ENCODE measurements at regions of chr16 and their contacts with region 1.

Region 1: DNA sequence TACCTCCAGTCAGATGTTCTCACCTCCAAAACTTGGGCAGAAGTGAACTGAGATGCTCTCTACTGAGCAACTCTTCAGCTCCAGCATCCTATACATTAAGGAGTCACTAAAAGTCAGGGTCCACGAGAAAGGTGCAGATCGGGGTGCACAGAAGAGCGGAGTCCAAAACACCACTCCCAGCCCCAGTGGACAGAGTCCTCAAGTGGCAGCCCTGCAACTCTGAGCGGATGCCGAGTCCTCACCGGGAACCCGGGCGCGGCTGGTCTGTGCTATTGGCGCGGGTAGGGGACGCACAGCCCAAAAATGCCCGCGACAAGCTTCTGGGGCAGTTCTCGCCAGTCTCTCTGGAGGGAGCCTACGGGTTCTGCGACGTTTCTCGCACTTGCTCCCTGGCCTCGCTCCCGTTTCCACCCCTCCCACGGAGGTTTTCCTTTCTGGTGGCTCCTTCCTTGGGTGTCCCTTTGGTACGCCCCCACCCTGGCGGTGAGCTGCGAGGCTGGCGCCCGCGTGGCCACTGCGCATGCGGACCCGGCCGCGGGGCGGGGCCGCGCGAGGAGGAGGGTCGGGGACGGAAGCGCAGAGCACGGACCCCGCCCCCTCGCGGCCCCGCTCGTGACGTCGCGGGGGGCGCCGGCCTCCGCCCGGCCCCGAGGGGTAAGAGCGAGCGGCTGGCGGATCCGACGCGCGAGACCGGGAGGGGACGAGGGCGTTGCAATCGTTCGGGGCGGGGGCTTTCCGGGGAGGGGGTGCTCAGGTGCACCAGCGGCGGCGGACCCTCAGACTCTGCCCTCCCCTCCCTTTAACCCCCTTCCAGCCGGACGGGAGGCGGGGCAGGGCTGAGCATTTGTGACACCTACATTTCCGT is at the start of gene TMEM219:
- DNase-seq: peak; percentile 88 to 94
- ATAC-seq: peak; percentile 96 to 97
- H3K4me3 ChIP-seq: peak within 1 kb of the TSS; percentile 74
- H3K27ac ChIP-seq: peak within 1 kb of the TSS; percentile 86 to 96
- H3K4me1 ChIP-seq: peaks cover 12% of the 10 kb centered on the region; the same call in 1 of the 3 replicates
- CTCF ChIP-seq: no peak; the same call in 1 of the 3 replicates
- EP300 ChIP-seq: no peak
- POLR2A ChIP-seq: peak; percentile 53
- RAD21 ChIP-seq: peak in 1 of 2 experiments; percentile 47; a peak in 4 of 5 replicates
- polyA plus RNA-seq, gene TMEM219: 65.1 and 82.5 TPM in 2 replicates

Region 2: GRCh38 chr16:29943846-29944669 is 17.7 kb before region 1 on chr16:
- CTCF ChIA-PET with region 1: interaction called, 17 read pairs
- POLR2A ChIA-PET with region 1: interaction called, 45 read pairs
- DNase-seq: peak; percentile 85 to 99
- ATAC-seq: peak; percentile 98 to 99
- H3K4me3 ChIP-seq: peak overlapping the region; percentile 14
- H3K27ac ChIP-seq: peak overlapping the region; percentile 92 to 94
- H3K4me1 ChIP-seq: peaks cover 26% of the 10 kb centered on the region
- CTCF ChIP-seq: peak; percentile 64
- EP300 ChIP-seq: no peak; a peak in 1 of 5 replicates
- POLR2A ChIP-seq: peak; percentile 31
- RAD21 ChIP-seq: peak; percentile 47 to 56

Measured in A549 (cell line).